BJ (cell line): ENCODE measurements at regions of chr6 and their contacts with region 1.

Region 1: GRCh38 chr6:37624986-37625574 is 72.6 kb downstream of the MDGA1 start:
- DNase-seq: no peak
- H3K4me3 ChIP-seq: no peak overlapping the region
- H3K27me3 ChIP-seq: peaks cover 3% of the 10 kb centered on the region; the same call in 1 of the 2 replicates
- CTCF ChIP-seq: no peak

Region 2: DNA sequence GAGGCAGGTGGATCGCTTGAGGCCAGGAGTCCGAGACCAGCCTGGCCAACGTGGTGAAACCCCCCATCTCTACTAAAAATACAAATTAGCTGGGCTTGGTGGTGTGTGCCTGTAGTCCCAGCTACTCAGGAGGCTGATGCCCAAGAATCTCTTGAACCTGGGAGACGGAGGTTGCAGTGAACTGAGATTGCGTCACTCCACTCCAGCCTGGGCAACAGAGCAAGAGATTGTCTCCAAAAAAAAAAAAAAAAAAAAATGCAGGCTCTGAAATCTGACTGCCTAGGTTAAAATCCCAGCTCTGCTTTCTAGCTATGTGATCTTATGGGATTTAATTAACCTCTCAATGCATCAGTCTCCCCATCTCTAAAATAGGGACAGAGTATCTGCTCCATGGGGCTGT is 363.9 kb before region 1 on chr6:
- CTCF ChIA-PET with region 1: no interaction called
- POLR2A ChIA-PET with region 1: interaction called, 13 read pairs
- DNase-seq: no peak
- H3K4me3 ChIP-seq: no peak overlapping the region
- H3K27me3 ChIP-seq: no peaks in the 10 kb centered on the region
- CTCF ChIP-seq: no peak

Region 3: GRCh38 chr6:37600287-37600916 is 24.7 kb before region 1 on chr6:
- CTCF ChIA-PET with region 1: no interaction called
- POLR2A ChIA-PET with region 1: no interaction called
- DNase-seq: no peak
- H3K4me3 ChIP-seq: no peak overlapping the region
- H3K27me3 ChIP-seq: peaks cover 12% of the 10 kb centered on the region
- CTCF ChIP-seq: no peak

Region 4: GRCh38 chr6:38001386-38001785 is 376.3 kb after region 1 on chr6:
- CTCF ChIA-PET with region 1: no interaction called
- POLR2A ChIA-PET with region 1: no interaction called
- DNase-seq: no peak
- H3K4me3 ChIP-seq: no peak overlapping the region
- H3K27me3 ChIP-seq: no peaks in the 10 kb centered on the region
- CTCF ChIP-seq: no peak